Endothelial cell of umbilical vein (primary cell): ENCODE measurements at regions of chr2 and their contacts with region 1.

Region 1: DNA sequence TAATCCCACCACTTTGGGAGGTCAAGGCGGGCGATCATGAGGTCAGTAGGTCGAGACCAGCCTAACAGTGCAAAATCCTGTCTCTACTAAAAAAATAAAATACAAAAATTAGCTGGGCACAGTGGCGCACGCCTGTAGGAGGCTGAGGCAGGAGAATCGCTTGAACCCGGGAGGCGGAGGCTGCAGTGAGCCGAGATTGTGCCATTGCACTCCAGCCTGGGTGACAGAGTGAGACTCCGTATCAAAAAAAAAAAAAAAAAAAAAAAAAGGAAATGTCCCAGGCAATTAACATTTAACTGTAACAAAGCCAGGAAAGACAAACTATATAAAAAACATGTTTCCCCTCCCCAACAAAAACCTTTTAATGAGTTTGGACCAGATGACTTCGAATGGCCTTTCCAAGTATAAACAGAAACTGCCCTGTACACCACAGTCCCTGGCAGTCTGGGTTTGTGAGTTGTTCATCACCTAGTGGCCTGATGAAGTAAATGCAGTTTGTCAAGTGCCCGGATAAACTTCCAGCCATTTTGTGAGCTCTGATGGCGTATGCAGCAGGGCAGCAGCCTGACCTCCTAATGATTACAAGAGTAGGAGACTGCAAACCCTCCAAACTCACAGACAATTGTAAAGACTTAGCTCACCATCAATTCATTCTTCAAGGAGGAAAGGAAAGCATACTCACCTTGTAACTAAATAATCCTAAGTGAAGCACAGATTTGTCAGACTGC is 16.6 kb upstream of the PCBP1 start:
- DNase-seq: peak; percentile 88
- H3K4me3 ChIP-seq: no peak overlapping the region
- H3K27ac ChIP-seq: no peak overlapping the region
- H3K4me1 ChIP-seq: peaks cover 3% of the 10 kb centered on the region
- H3K27me3 ChIP-seq: no peaks in the 10 kb centered on the region
- CTCF ChIP-seq: peak; percentile 75 to 81
- POLR2A ChIP-seq: no peak

Region 2: GRCh38 chr2:69933839-69934613 is 136.7 kb before region 1 on chr2:
- CTCF ChIA-PET with region 1: interaction called, 10 read pairs
- POLR2A ChIA-PET with region 1: interaction called, 4 read pairs
- dilution Hi-C with region 1: no loop called
- intact Hi-C with region 1: no loop called
- DNase-seq: peak; percentile 87
- H3K4me3 ChIP-seq: peak overlapping the region in 1 of 3 experiments; percentile 30
- H3K27ac ChIP-seq: peak overlapping the region; percentile 95
- H3K4me1 ChIP-seq: peaks cover 37% of the 10 kb centered on the region
- H3K27me3 ChIP-seq: no peaks in the 10 kb centered on the region
- CTCF ChIP-seq: no peak
- POLR2A ChIP-seq: peak; percentile 77

Region 3: DNA sequence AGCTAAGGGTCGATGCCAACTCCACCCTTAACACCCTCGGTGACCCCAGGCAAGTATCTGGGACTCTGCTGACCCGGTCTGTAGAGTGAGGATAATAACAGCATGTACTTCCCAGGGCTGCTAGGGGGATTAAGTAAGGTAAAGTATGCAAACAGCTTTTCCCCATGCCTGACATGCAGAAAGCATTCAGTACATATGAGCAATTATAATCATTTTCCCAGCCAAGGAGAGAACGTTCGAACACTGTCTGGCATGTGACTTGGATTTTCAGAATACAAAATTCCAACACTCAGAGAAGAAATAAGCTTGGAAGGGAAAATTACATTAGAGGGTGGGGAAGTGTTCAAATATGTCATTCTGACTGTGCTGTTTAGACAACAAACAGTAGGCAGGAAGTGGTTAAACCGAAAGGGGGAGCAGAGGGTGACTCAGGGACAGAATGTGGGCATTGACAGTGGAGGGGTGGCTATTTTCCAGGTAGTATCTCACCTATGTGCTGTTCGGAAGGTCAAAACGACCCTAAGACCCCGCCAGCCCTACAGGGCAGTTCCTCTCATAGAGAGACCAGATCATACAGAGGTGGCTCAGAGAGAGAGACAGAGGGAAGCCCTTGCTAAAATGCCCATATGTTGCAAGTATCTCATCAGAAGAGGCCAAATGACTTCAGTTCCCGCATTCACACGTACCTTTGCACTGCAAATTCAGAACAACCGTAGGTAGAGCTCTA is 124.2 kb before region 1 on chr2:
- CTCF ChIA-PET with region 1: interaction called, 12 read pairs
- POLR2A ChIA-PET with region 1: no interaction called
- dilution Hi-C with region 1: no loop called
- intact Hi-C with region 1: no loop called
- DNase-seq: peak; percentile 41
- H3K4me3 ChIP-seq: no peak overlapping the region
- H3K27ac ChIP-seq: peak overlapping the region; percentile 54
- H3K4me1 ChIP-seq: peaks cover 25% of the 10 kb centered on the region
- H3K27me3 ChIP-seq: no peaks in the 10 kb centered on the region
- CTCF ChIP-seq: no peak
- POLR2A ChIP-seq: no peak

Region 4: GRCh38 chr2:70041663-70042062 is 29.0 kb before region 1 on chr2:
- CTCF ChIA-PET with region 1: interaction called, 10 read pairs
- POLR2A ChIA-PET with region 1: no interaction called
- dilution Hi-C with region 1: no loop called
- intact Hi-C with region 1: no loop called
- DNase-seq: no peak
- H3K4me3 ChIP-seq: no peak overlapping the region
- H3K27ac ChIP-seq: no peak overlapping the region
- H3K4me1 ChIP-seq: peaks cover 4% of the 10 kb centered on the region
- H3K27me3 ChIP-seq: no peaks in the 10 kb centered on the region
- CTCF ChIP-seq: no peak
- POLR2A ChIP-seq: no peak

Region 5: DNA sequence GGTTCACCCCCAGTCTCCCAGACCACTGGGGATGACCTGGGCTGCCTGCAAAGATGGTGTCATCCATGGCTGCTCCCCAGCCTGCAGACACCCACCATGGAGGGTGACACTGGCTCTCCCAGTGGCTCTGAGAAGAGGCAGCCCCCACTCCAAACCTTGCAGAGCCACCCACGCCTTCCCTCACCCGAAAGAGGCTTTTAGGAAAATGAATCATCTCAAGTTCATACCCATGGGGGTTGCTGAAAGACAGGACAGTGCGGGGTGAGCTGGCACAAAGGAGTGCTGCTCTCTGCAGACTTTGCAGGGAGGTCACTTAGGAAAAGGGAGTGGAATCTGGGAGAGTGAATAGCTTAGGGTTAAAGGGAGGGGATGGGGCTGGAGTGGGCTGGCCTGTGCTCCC is 1096.1 kb after region 1 on chr2:
- CTCF ChIA-PET with region 1: no interaction called
- POLR2A ChIA-PET with region 1: no interaction called
- dilution Hi-C with region 1: no loop called
- intact Hi-C with region 1: no loop called
- DNase-seq: no peak
- H3K4me3 ChIP-seq: no peak overlapping the region
- H3K27ac ChIP-seq: no peak overlapping the region
- H3K4me1 ChIP-seq: peaks cover 2% of the 10 kb centered on the region
- H3K27me3 ChIP-seq: peaks cover 2% of the 10 kb centered on the region in 2 experiments
- CTCF ChIP-seq: no peak
- POLR2A ChIP-seq: no peak